Sigmoid colon (tissue), 7 donors: ENCODE measurements at regions of chr10 and their contacts with region 1.

Region 1: GRCh38 chr10:71569775-71570588 is 149.6 kb downstream of the C10orf105 start:
- DNase-seq: peak; percentile 84
- H3K4me3 ChIP-seq: no peak overlapping the region
- H3K27ac ChIP-seq: no peak overlapping the region
- H3K4me1 ChIP-seq: no peaks in the 10 kb centered on the region
- H3K27me3 ChIP-seq: no peaks in the 10 kb centered on the region
- CTCF ChIP-seq: peak; percentile 49 to 83 (median 74)
- EP300 ChIP-seq: no peak
- POLR2A ChIP-seq: no peak

Region 2: GRCh38 chr10:71176661-71177060 is 393.3 kb before region 1 on chr10:
- intact Hi-C with region 1: no loop called
- DNase-seq: no peak
- H3K4me3 ChIP-seq: no peak overlapping the region
- H3K27ac ChIP-seq: no peak overlapping the region
- H3K4me1 ChIP-seq: no peaks in the 10 kb centered on the region
- H3K27me3 ChIP-seq: no peaks in the 10 kb centered on the region
- CTCF ChIP-seq: no peak
- EP300 ChIP-seq: no peak
- POLR2A ChIP-seq: no peak

Region 3: GRCh38 chr10:71314028-71314693 is 255.8 kb before region 1 on chr10:
- intact Hi-C with region 1: loop called (anchors 1 kb)
- DNase-seq: peak; percentile 80
- H3K4me3 ChIP-seq: peak overlapping the region in 1 of 4 donors; percentile 6
- H3K27ac ChIP-seq: peak overlapping the region; percentile 62 to 73 (median 66)
- H3K4me1 ChIP-seq: peaks cover 0 to 33% (median 29%) of the 10 kb centered on the region in 4 donors
- H3K27me3 ChIP-seq: no peaks in the 10 kb centered on the region
- CTCF ChIP-seq: peak; percentile 66 to 88 (median 72)
- EP300 ChIP-seq: no peak
- POLR2A ChIP-seq: no peak

Region 4: GRCh38 chr10:71383972-71384687 is 185.9 kb before region 1 on chr10:
- intact Hi-C with region 1: loop called (anchors 2 kb)
- DNase-seq: peak; percentile 83
- H3K4me3 ChIP-seq: no peak overlapping the region
- H3K27ac ChIP-seq: no peak overlapping the region
- H3K4me1 ChIP-seq: no peaks in the 10 kb centered on the region
- H3K27me3 ChIP-seq: no peaks in the 10 kb centered on the region
- CTCF ChIP-seq: peak; percentile 75 to 91 (median 87)
- EP300 ChIP-seq: no peak
- POLR2A ChIP-seq: no peak

Region 5: DNA sequence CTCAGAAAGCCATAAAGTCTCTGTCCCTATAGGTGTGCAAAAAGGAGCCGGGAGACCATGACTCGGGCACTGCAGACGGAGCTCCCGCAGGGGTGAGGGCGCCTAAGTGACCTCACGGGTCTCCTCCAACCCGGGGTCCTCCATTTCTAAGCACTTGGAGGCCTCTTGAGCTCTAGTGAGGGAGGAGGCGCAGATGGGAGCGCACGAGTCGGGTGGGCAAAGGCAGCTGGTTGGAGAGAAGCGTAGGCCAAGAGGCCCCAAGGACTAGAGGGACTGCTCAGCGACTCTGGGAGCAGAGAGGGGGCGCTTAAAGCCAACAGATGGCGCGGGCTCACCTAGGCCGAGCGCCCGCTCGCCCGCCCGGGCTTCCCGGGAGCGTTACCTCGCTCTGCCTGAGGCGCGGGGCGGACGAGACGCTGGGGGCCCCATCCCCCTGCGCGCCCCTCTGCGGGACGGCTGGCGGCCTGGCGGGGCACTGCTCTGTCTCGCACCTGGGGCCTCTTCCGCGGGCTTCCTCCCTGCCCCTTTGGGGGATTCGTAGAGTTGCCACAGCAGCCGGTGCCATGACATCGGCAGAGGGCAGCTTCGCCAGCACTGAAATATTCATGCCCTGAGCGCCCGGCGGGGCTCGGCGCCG is 173.8 kb before region 1 on chr10:
- intact Hi-C with region 1: loop called (anchors 2 kb)
- DNase-seq: peak; percentile 75
- H3K4me3 ChIP-seq: peak overlapping the region; percentile 43 to 61 (median 52)
- H3K27ac ChIP-seq: peak overlapping the region in 3 of 4 donors; percentile 19 to 79 (median 63)
- H3K4me1 ChIP-seq: peaks cover 0 to 26% (median 18%) of the 10 kb centered on the region in 4 donors
- H3K27me3 ChIP-seq: peaks cover 23 to 46% (median 38%) of the 10 kb centered on the region in 3 donors
- CTCF ChIP-seq: peak; percentile 21 to 55 (median 38)
- EP300 ChIP-seq: no peak
- POLR2A ChIP-seq: no peak

Region 6: GRCh38 chr10:71597821-71598498 is 28.0 kb after region 1 on chr10:
- intact Hi-C with region 1: no loop called
- DNase-seq: peak; percentile 78
- H3K4me3 ChIP-seq: no peak overlapping the region
- H3K27ac ChIP-seq: peak overlapping the region; percentile 48 to 73 (median 67)
- H3K4me1 ChIP-seq: peaks cover 0 to 14% (median 10%) of the 10 kb centered on the region in 4 donors
- H3K27me3 ChIP-seq: no peaks in the 10 kb centered on the region
- CTCF ChIP-seq: no peak
- EP300 ChIP-seq: no peak
- POLR2A ChIP-seq: no peak